Activated T-helper 1 cell treated with anti-CD3 and anti-CD28 coated beads, Interleukin-12 subunit alpha, Interleukin-12 subunit beta, Interleukin-2, Interleukin-4 antibody, amounts not matched to agents 30 ng/mL and 10 ng/mL and 1 ng/mL, durations not matched to agents 14 hours and 24 hours and 36 hours (primary cell): ENCODE measurements at regions of chr7 and their contacts with region 1.

Region 1: DNA sequence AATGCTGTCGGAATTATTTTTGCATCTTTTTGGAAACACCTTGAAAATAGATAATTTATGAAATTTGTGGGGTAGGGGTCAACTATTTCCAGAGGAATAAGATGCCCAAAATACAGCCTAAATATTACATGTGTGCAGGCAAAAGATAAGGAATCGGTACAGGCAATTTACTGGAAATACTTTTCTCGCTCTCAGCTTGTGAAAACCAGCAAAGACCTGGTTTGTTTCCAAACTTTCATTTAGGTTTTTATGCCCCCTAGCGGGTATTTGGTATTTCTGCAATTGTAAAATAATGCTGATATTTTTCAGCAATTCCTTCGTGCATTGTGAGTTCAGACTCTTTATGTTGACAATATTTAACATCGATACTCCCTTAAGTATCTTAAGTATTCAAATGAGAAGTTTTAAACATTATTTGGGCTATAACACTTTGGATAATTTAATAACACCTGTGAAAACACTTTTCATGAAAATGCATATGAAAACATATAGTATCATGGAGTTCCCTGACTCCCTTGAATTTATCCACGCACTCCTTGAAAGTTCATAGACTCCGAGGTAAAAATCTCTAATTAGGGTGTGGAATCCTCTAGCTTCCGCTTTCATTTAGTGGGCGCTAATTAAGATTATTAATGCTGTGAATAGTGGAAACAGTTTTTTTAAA is 132.4 kb downstream of the TSPAN12 start:
- DNase-seq: no peak
- H3K4me3 Mint-ChIP-seq: no peak overlapping the region
- H3K27ac Mint-ChIP-seq: no peak overlapping the region
- H3K4me1 Mint-ChIP-seq: no peaks in the 10 kb centered on the region
- H3K27me3 Mint-ChIP-seq: no peaks in the 10 kb centered on the region

Region 2: DNA sequence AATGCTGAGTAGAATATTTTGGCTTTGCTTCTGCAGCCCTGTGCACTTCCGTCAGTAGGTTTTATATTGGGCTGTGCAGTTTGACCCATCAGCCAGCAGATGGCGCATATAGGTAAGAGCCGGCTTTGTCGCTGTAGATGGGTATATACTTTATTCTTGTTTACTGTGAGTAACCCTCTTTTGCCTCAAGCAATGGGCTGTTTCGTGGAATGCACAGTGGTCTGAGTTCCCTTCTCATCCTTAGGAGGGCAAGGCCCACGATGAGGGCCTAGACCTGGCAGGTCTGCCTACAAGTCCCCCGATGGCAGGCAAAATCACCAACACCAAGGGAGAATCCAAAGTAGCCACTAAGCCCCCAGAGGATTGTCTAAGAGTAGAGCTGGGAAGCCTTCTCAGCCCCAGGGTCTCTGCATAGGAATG is 1455.5 kb before region 1 on chr7:
- intact Hi-C with region 1: loop called (anchors 2 kb)
- DNase-seq: no peak
- H3K4me3 Mint-ChIP-seq: no peak overlapping the region
- H3K27ac Mint-ChIP-seq: no peak overlapping the region
- H3K4me1 Mint-ChIP-seq: no peaks in the 10 kb centered on the region
- H3K27me3 Mint-ChIP-seq: no peaks in the 10 kb centered on the region

Region 3: DNA sequence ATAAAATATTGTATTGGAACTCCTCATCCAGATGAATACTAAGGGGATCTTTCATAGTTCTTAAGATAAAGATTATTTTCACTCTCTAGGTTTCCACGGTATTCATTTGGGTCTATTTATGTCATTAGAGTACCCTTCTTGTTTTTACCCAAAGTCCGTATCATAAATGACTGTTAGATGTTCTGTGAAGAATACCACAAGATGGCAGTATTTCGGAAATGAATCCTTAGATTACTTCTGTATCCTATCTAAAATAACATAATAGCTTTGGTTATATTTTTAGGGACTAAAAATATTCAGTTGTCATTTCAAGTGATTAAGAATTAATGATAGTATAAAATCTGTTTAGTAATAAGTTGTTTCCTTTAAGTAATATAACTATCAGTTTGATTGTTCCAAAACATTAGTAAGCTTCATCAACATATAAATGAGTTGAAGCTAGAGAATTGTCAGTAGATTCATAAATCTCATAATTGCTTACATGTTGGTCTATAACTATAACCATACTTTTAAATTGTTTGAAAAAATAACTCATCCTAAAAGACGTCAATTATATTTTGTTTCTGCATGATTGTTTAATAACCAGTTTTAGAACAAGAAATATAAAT is 790.0 kb before region 1 on chr7:
- intact Hi-C with region 1: loop called (anchors 5 kb)
- DNase-seq: no peak
- H3K4me3 Mint-ChIP-seq: no peak overlapping the region
- H3K27ac Mint-ChIP-seq: no peak overlapping the region
- H3K4me1 Mint-ChIP-seq: no peaks in the 10 kb centered on the region
- H3K27me3 Mint-ChIP-seq: no peaks in the 10 kb centered on the region